ENCODE measurements at regions of chr15 and their contacts with region 1.

Region 1: DNA sequence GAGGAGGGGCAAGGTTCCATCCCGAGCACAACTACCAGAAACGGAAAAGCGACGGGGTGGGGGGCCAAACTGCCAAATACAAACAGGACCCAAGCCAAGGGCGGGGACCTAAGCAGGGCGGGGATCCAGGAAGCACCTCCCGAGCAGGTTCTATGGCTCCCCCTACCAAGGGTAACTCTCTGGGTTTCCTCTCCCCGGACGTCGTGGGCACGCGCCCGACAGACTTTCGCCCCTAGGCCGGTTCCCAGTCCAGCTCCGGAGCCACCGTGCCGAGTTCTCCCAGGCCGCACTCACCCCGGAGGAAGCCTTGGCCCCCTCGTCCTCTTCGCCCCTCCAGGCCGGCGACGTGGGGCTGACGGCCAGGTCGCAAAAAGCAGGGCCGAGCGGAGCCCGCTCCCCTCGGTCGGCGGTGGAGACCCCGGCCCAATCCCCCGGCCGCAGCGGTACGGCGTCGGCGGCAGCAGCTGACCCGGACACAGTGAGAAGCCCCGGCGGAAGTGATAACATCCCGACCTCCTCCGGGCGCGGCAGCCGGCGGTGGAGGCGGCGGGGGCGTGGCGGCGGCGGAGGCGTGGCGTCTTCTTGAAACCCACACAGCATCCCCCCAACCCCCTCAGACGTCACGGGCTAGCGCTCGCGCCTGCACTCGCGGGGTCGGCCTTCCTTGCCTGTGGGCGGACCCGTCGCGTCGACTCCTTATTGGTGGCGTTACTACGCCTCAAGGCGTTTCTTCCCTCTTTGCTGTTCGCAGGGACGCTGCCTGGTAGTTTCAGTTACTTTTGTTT is at the start of gene BNIP2:
- DNase-seq: peak; percentile 94 to 100 (median 99)
- ATAC-seq: peak; percentile 95
- H3K4me3 ChIP-seq: peak within 1 kb of the TSS; percentile 97
- H3K4me3 Mint-ChIP-seq: peak within 1 kb of the TSS; percentile 90 to 98 (median 96)
- H3K27ac ChIP-seq: peak within 1 kb of the TSS; percentile 97
- H3K27ac Mint-ChIP-seq: peak within 1 kb of the TSS; percentile 81 to 99 (median 99)
- H3K4me1 ChIP-seq: peaks cover 29 to 30% of the 10 kb centered on the region in 2 donors
- H3K4me1 Mint-ChIP-seq: peaks cover 35 to 57% (median 49%) of the 10 kb centered on the region in 7 donors
- H3K27me3 ChIP-seq: no peaks in the 10 kb centered on the region
- H3K27me3 Mint-ChIP-seq: no peaks in the 10 kb centered on the region
- total RNA-seq, gene BNIP2: 76.1 to 116 (median 87.0) TPM

Region 2: DNA sequence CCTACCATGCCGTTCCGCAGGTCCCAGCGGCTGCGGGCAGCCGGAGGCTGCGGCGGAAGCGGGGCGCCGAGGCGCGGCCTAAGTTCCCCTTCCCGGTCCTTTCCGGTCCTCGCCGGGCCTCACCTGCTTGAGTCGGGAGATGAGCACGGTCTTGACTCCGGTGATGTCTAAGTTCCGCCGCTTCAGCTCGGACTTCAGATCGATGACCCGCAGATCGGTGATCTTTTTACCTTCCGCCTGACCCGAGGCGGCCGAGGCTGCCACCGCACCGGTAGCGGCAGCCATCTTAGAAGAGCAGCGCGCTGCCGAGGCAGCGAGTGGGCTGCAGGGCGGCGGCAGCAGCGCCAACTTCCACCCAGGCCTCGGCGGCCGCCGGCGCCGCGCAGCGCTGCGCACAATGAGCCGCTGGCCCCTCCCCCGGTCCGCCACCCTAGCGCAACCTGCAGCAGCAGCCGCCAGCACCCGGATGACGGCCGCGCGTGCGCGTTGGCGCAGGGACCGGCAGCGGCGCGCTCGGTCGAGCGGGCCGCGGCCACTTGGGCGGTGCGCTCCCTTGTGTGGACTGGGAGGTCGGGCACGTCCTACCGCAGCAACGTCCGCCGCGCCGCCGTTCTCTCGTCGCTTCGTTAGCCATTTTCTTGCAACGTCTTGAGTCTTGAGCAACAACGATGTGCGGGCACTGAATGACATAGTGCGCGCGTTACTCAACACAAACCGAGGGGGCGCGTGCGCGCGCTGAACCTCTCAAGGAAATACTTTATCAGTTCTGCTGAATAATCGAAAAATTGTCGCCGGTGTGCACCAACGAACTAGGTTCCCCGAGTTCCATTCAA is 755.5 kb before region 1 on chr15 and contains the start of gene SLTM:
- CTCF ChIA-PET with region 1: no interaction called
- POLR2A ChIA-PET with region 1: no interaction called
- intact Hi-C with region 1: loop called (anchors 1 kb)
- DNase-seq: peak; percentile 90 to 95 (median 93)
- ATAC-seq: peak; percentile 95
- H3K4me3 ChIP-seq: peak within 1 kb of the TSS; percentile 91
- H3K4me3 Mint-ChIP-seq: peak within 1 kb of the TSS; percentile 91 to 100 (median 98)
- H3K27ac ChIP-seq: peak within 1 kb of the TSS; percentile 93
- H3K27ac Mint-ChIP-seq: peak within 1 kb of the TSS; percentile 98 to 100 (median 99)
- H3K4me1 ChIP-seq: peaks cover 19 to 21% of the 10 kb centered on the region in 2 donors
- H3K4me1 Mint-ChIP-seq: peaks cover 14 to 34% (median 27%) of the 10 kb centered on the region in 7 donors
- H3K27me3 ChIP-seq: no peaks in the 10 kb centered on the region
- H3K27me3 Mint-ChIP-seq: no peaks in the 10 kb centered on the region
- total RNA-seq, gene SLTM: 118 to 166 (median 159) TPM

Region 3: DNA sequence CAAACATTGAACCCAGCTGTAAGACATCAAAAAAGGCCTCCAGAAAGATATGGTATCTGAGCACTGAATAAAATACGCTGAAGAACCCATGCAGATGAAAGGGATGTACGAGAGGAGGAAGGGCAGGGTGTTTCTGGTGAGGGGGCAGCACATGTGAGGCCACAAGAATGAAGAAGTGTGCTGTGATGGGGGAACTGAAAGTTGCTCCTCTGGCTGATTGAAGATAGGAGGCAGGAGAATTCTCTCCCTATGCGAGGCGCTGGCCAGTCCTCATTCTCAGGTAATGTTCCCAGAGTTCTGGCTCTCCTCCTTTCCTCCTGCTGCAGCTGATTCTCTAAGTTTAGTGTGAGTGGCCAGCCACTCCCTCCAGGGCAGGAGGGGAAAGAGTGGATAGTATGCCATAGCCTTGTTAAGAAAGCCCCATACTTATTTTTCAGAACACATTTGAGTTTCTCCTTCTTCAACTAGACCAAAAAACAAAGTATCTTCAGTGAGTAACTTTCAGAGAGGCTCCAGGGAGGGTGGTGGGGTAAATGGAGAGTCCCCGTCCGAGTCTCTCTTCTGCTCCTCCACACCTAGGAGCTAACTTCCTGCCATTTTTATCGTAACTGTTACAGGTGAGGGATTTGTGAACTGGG is 289.4 kb before region 1 on chr15:
- CTCF ChIA-PET with region 1: no interaction called
- POLR2A ChIA-PET with region 1: no interaction called
- intact Hi-C with region 1: no loop called
- DNase-seq: no peak
- ATAC-seq: peak; percentile 74
- H3K4me3 ChIP-seq: no peak overlapping the region
- H3K4me3 Mint-ChIP-seq: no peak overlapping the region
- H3K27ac ChIP-seq: no peak overlapping the region
- H3K27ac Mint-ChIP-seq: no peak overlapping the region
- H3K4me1 ChIP-seq: no peaks in the 10 kb centered on the region
- H3K4me1 Mint-ChIP-seq: peaks cover 0 to 12% (median 0%) of the 10 kb centered on the region in 7 donors
- H3K27me3 ChIP-seq: no peaks in the 10 kb centered on the region
- H3K27me3 Mint-ChIP-seq: peaks cover 5 to 54% (median 21%) of the 10 kb centered on the region in 5 donors

Region 4: DNA sequence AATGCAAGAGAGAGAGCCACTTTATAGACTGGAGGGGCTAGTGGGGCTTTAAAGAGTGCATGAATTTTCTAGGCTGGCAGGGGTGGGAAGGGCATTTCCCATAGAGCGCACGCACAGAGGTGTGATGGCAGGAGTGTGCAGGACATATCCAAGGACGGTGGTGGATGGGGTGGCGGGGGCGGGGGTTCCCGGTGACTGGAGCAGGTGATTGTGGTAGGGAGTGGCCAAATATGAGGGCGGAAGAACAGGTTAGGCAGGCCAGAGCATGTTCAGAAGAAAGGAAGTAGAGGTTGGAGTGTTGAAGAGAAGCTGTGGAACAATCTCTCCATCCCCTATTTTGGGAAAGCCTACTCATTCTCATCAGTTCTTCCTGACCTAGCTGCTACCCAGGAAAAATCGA is 232.9 kb before region 1 on chr15:
- CTCF ChIA-PET with region 1: no interaction called
- POLR2A ChIA-PET with region 1: no interaction called
- intact Hi-C with region 1: no loop called
- DNase-seq: no peak
- ATAC-seq: no peak
- H3K4me3 ChIP-seq: no peak overlapping the region
- H3K4me3 Mint-ChIP-seq: no peak overlapping the region
- H3K27ac ChIP-seq: no peak overlapping the region
- H3K27ac Mint-ChIP-seq: no peak overlapping the region
- H3K4me1 ChIP-seq: no peaks in the 10 kb centered on the region
- H3K4me1 Mint-ChIP-seq: peaks cover 0 to 1% (median 0%) of the 10 kb centered on the region in 7 donors
- H3K27me3 ChIP-seq: no peaks in the 10 kb centered on the region
- H3K27me3 Mint-ChIP-seq: peaks cover 0 to 43% (median 4%) of the 10 kb centered on the region in 5 donors

Region 5: DNA sequence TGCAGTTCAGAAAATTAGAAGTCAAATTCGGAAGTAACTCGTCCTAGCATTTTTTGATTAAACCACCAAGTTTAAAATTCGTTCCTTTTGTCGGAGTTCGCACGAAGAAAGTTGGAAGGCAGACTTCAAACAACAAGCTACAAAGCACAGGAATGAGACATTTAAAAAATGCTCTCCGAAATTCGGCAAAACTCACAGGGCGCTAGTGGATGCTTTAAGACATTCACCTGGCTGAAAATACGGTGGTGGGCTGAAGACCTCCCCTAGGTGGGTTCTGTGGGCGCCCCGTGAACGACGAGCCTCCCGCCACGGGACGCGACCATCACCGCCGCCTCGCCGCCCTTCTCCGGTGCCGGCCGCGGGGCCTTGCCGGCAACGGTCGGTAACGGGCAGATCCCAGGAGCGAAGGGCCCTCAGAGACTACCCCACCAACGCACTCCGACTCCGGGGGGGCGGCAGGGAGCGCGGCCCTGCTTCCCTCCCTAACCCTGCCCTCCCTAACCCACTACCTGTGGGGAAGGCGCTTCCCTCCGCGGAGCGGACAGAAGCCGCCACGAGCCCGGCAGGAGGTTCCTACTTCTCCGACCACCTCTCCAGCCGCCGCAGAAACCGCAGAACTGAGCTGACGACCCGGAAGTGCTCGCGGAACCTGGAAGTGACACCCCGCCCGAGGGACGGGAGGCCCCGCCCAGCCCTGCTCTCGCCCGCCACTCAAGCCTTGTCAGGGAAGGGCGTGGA is 32.0 kb before region 1 on chr15 and contains the start of gene GTF2A2:
- CTCF ChIA-PET with region 1: interaction called, 3 read pairs
- POLR2A ChIA-PET with region 1: interaction called, 35 read pairs
- intact Hi-C with region 1: loop called (anchors 1 kb)
- DNase-seq: peak; percentile 81 to 95 (median 89)
- ATAC-seq: peak; percentile 99
- H3K4me3 ChIP-seq: peak within 1 kb of the TSS; percentile 77
- H3K4me3 Mint-ChIP-seq: peak within 1 kb of the TSS in 7 of 10 donors; percentile 18 to 52 (median 26)
- H3K27ac ChIP-seq: peak within 1 kb of the TSS; percentile 89
- H3K27ac Mint-ChIP-seq: peak within 1 kb of the TSS in 4 of 9 donors; percentile 76 to 88 (median 78)
- H3K4me1 ChIP-seq: peaks cover 18% of the 10 kb centered on the region in 2 donors
- H3K4me1 Mint-ChIP-seq: peaks cover 4 to 17% (median 11%) of the 10 kb centered on the region in 7 donors
- H3K27me3 ChIP-seq: no peaks in the 10 kb centered on the region
- H3K27me3 Mint-ChIP-seq: no peaks in the 10 kb centered on the region
- total RNA-seq, gene GTF2A2: 46.6 to 124 (median 50.1) TPM

Region 6: GRCh38 chr15:59814409-59814808 is 125.4 kb after region 1 on chr15:
- CTCF ChIA-PET with region 1: no interaction called
- POLR2A ChIA-PET with region 1: no interaction called
- intact Hi-C with region 1: no loop called
- DNase-seq: peak in 7 of 9 donors; percentile 51 to 73 (median 64)
- ATAC-seq: peak; percentile 91
- H3K4me3 ChIP-seq: no peak overlapping the region
- H3K4me3 Mint-ChIP-seq: peak overlapping the region; percentile 23 to 84 (median 58)
- H3K27ac ChIP-seq: peak overlapping the region; percentile 41
- H3K27ac Mint-ChIP-seq: peak overlapping the region; percentile 2 to 94 (median 90)
- H3K4me1 ChIP-seq: peaks cover 0 to 22% of the 10 kb centered on the region in 2 donors
- H3K4me1 Mint-ChIP-seq: peaks cover 9 to 39% (median 35%) of the 10 kb centered on the region in 7 donors
- H3K27me3 ChIP-seq: no peaks in the 10 kb centered on the region
- H3K27me3 Mint-ChIP-seq: peaks cover 0 to 37% (median 0%) of the 10 kb centered on the region in 5 donors

Region 7: GRCh38 chr15:59917504-59918157 is 228.6 kb after region 1 on chr15:
- CTCF ChIA-PET with region 1: interaction called, 4 read pairs
- POLR2A ChIA-PET with region 1: no interaction called
- intact Hi-C with region 1: loop called in 1 of 2 experiments (anchors 2 kb)
- DNase-seq: peak; percentile 31 to 67 (median 54)
- ATAC-seq: peak; percentile 90
- H3K4me3 ChIP-seq: no peak overlapping the region
- H3K4me3 Mint-ChIP-seq: peak overlapping the region in 1 of 10 donors; percentile 33
- H3K27ac ChIP-seq: no peak overlapping the region
- H3K27ac Mint-ChIP-seq: peak overlapping the region in 4 of 9 donors; percentile 31 to 51 (median 37)
- H3K4me1 ChIP-seq: peaks cover 0 to 11% of the 10 kb centered on the region in 2 donors
- H3K4me1 Mint-ChIP-seq: peaks cover 6 to 29% (median 25%) of the 10 kb centered on the region in 7 donors
- H3K27me3 ChIP-seq: peaks cover 0 to 5% of the 10 kb centered on the region in 2 donors
- H3K27me3 Mint-ChIP-seq: peaks cover 0 to 30% (median 8%) of the 10 kb centered on the region in 5 donors

Region 8: GRCh38 chr15:60179786-60180391 is 490.9 kb after region 1 on chr15:
- CTCF ChIA-PET with region 1: interaction called, 3 read pairs
- POLR2A ChIA-PET with region 1: no interaction called
- intact Hi-C with region 1: loop called in 1 of 2 experiments (anchors 1 kb)
- DNase-seq: peak in 7 of 9 donors; percentile 19 to 52 (median 41)
- ATAC-seq: peak; percentile 73
- H3K4me3 ChIP-seq: no peak overlapping the region
- H3K4me3 Mint-ChIP-seq: no peak overlapping the region
- H3K27ac ChIP-seq: no peak overlapping the region
- H3K27ac Mint-ChIP-seq: no peak overlapping the region
- H3K4me1 ChIP-seq: no peaks in the 10 kb centered on the region
- H3K4me1 Mint-ChIP-seq: no peaks in the 10 kb centered on the region
- H3K27me3 ChIP-seq: no peaks in the 10 kb centered on the region
- H3K27me3 Mint-ChIP-seq: peaks cover 2 to 49% (median 9%) of the 10 kb centered on the region in 5 donors

Region 9: GRCh38 chr15:60212536-60212935 is 523.5 kb after region 1 on chr15:
- CTCF ChIA-PET with region 1: no interaction called
- POLR2A ChIA-PET with region 1: no interaction called
- intact Hi-C with region 1: no loop called
- DNase-seq: no peak
- ATAC-seq: no peak
- H3K4me3 ChIP-seq: no peak overlapping the region
- H3K4me3 Mint-ChIP-seq: no peak overlapping the region
- H3K27ac ChIP-seq: no peak overlapping the region
- H3K27ac Mint-ChIP-seq: no peak overlapping the region
- H3K4me1 ChIP-seq: no peaks in the 10 kb centered on the region
- H3K4me1 Mint-ChIP-seq: no peaks in the 10 kb centered on the region
- H3K27me3 ChIP-seq: no peaks in the 10 kb centered on the region
- H3K27me3 Mint-ChIP-seq: peaks cover 11 to 41% (median 33%) of the 10 kb centered on the region in 5 donors

Region 10: GRCh38 chr15:60478566-60479360 is 789.7 kb after region 1 on chr15 and contains the start of gene ICE2:
- CTCF ChIA-PET with region 1: no interaction called
- POLR2A ChIA-PET with region 1: interaction called, 3 read pairs
- intact Hi-C with region 1: loop called (anchors 1 kb)
- DNase-seq: peak; percentile 89 to 96 (median 94)
- ATAC-seq: peak; percentile 97
- H3K4me3 ChIP-seq: peak within 1 kb of the TSS; percentile 83
- H3K4me3 Mint-ChIP-seq: peak within 1 kb of the TSS; percentile 93 to 100 (median 98)
- H3K27ac ChIP-seq: peak within 1 kb of the TSS; percentile 93
- H3K27ac Mint-ChIP-seq: peak within 1 kb of the TSS; percentile 98 to 100 (median 99)
- H3K4me1 ChIP-seq: peaks cover 23 to 25% of the 10 kb centered on the region in 2 donors
- H3K4me1 Mint-ChIP-seq: peaks cover 43 to 86% (median 70%) of the 10 kb centered on the region in 7 donors
- H3K27me3 ChIP-seq: no peaks in the 10 kb centered on the region
- H3K27me3 Mint-ChIP-seq: no peaks in the 10 kb centered on the region
- total RNA-seq, gene ICE2: 44.8 to 70.9 (median 68.0) TPM